Endothelial cell of umbilical vein (primary cell): ENCODE measurements at regions of chr9 and their contacts with region 1.

Region 1: DNA sequence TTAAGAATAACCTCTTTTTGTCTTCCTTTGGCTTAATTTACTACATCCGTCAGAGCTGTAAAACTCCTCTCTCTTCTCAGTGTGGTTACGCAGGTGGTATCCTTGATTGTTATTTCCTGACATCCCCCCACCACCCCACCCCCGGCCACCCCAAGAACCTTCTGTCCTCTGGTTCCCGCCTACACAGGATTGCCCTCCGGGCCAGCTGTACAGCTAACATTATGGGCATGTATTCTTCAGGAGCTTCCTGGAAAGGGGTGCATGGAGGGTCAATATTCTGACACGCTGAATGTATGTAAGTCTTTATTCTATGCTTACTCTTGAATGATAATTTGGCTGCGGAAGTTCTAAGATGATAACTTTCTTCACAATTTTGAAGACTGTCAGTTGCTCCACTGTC is 13.0 kb upstream of the ANP32B start:
- DNase-seq: no peak
- H3K4me3 ChIP-seq: no peak overlapping the region
- H3K27ac ChIP-seq: no peak overlapping the region
- H3K4me1 ChIP-seq: no peaks in the 10 kb centered on the region
- H3K27me3 ChIP-seq: peaks cover 13 to 24% of the 10 kb centered on the region in 2 experiments
- CTCF ChIP-seq: no peak
- POLR2A ChIP-seq: no peak

Region 2: DNA sequence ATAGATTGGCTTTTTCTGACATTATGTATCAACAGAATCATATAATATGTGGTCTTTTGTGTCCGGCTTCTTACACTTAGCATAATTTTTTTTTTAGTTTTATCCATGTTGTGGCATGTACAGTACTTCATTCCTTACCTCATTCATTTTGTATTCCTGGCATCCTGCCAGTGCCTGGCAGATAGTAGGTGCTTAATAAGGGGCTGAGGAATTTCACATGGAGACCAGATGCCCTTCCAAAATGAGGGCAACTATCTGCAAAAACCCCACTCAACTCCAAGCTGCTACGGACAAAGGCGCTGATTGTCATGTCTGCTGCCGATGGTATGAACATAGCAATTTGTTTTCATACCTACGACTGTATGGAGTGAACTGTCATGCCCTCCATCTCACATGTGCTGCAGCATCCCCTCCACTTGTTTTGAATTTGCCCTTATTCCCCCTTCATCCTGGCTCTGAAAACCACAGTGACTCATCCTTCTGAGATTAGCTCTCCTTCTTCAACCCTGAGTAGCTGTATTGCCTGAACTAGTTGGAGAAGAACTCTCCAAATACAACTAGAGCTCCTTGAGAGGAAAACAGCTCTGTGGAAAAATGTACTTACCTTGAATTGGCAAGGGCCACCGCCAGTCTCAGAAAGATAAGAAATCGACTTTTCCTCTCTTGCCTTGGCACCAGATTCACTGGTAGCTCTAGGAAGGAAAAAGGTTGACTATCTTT is 158.5 kb before region 1 on chr9:
- CTCF ChIA-PET with region 1: no interaction called
- POLR2A ChIA-PET with region 1: no interaction called
- dilution Hi-C with region 1: no loop called
- intact Hi-C with region 1: no loop called
- DNase-seq: peak; percentile 10
- H3K4me3 ChIP-seq: no peak overlapping the region
- H3K27ac ChIP-seq: no peak overlapping the region
- H3K4me1 ChIP-seq: peaks cover 12% of the 10 kb centered on the region
- H3K27me3 ChIP-seq: peaks cover 6 to 15% of the 10 kb centered on the region in 2 experiments
- CTCF ChIP-seq: no peak
- POLR2A ChIP-seq: no peak

Region 3: DNA sequence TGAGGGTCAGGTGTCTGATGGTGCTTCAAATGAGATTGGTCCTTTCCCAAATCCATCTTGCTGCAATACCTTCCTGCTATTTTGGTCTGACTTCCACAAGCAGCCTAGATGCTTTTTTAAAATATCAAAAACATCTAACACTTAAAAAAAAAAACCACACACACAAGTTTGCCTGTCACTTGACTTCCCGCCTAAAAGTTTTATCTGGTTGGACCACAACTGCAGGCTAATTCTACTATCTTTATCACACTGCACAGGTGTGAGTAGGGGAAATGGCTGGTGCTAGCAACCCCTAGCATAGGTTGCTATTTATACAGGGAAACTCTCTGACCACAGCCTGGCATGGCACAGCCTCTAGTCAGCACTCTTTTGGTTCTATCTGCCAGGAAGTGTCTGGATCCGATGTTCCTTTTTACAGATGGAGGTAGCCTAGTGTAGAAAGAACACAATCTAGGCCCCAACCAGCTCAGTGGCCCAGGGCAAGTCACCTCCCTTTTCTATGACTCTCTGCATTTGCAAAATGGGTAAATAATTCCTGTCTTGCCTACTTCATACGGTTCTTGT is 32.0 kb before region 1 on chr9 and contains the start of gene HEMGN:
- CTCF ChIA-PET with region 1: no interaction called
- POLR2A ChIA-PET with region 1: no interaction called
- dilution Hi-C with region 1: no loop called
- intact Hi-C with region 1: loop called (anchors 5 kb)
- DNase-seq: no peak
- H3K4me3 ChIP-seq: no peak within 1 kb of the TSS
- H3K27ac ChIP-seq: no peak within 1 kb of the TSS
- H3K4me1 ChIP-seq: no peaks in the 10 kb centered on the region
- H3K27me3 ChIP-seq: peaks cover 41 to 77% of the 10 kb centered on the region in 2 experiments
- CTCF ChIP-seq: no peak
- POLR2A ChIP-seq: no peak
- total RNA-seq, gene HEMGN: not detected in 2 replicates

Region 4: DNA sequence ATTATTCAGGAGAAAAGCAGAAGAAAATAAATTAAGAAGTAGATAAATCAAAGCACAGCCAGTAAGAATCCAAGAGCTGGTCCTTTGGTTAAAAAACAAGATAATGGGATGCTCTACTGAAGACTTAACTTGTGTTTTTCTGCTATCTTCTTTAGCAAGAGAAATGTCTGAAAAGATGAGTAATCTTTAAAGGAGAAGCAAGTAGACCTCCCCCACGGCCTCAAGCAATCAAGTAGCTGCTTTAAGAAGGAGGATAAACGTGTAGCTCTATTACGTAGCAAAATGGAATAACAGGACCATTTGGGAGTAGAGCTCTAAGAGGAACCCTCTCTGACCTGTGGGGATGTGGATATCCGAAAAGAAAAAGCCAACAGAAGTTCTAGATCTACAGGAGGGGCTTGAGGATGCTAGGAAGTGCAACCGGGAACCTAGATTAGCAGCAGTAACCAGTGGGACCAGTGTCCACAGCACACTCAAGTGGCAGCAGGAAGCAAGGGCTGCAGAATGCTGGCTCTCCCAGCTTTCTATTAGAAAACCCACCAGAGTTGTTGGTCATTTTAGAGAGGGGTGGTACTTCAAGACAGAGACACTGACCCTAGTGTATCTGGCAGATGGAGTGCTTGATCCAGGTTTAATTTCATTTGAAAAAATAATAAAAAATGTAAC is 553.2 kb after region 1 on chr9:
- CTCF ChIA-PET with region 1: no interaction called
- POLR2A ChIA-PET with region 1: no interaction called
- dilution Hi-C with region 1: no loop called
- intact Hi-C with region 1: no loop called
- DNase-seq: peak; percentile 30
- H3K4me3 ChIP-seq: no peak overlapping the region
- H3K27ac ChIP-seq: peak overlapping the region; percentile 60
- H3K4me1 ChIP-seq: peaks cover 34% of the 10 kb centered on the region
- H3K27me3 ChIP-seq: no peaks in the 10 kb centered on the region
- CTCF ChIP-seq: peak; percentile 17 to 45
- POLR2A ChIP-seq: no peak